Activated CD8-positive, alpha-beta T cell treated with anti-CD3 and anti-CD28 coated beads for 36 hours (primary cell): ENCODE measurements at regions of chr2 and their contacts with region 1.

Region 1: GRCh38 chr2:217713395-217714286 is 289.2 kb downstream of the TNS1 start:
- DNase-seq: peak; percentile 84
- ATAC-seq: peak; percentile 90
- H3K4me3 Mint-ChIP-seq: no peak overlapping the region
- H3K27ac Mint-ChIP-seq: no peak overlapping the region
- H3K4me1 Mint-ChIP-seq: peaks cover 4% of the 10 kb centered on the region
- H3K27me3 Mint-ChIP-seq: no peaks in the 10 kb centered on the region
- CTCF ChIP-seq: peak; percentile 87

Region 2: GRCh38 chr2:216698895-216699294 is 1014.7 kb before region 1 on chr2:
- CTCF ChIA-PET with region 1: interaction called, 10 read pairs
- POLR2A ChIA-PET with region 1: no interaction called
- intact Hi-C with region 1: no loop called
- DNase-seq: peak; percentile 21
- ATAC-seq: peak; percentile 70
- H3K4me3 Mint-ChIP-seq: no peak overlapping the region
- H3K27ac Mint-ChIP-seq: no peak overlapping the region
- H3K4me1 Mint-ChIP-seq: peaks cover 6% of the 10 kb centered on the region
- H3K27me3 Mint-ChIP-seq: peaks cover 30% of the 10 kb centered on the region
- CTCF ChIP-seq: peak; percentile 45

Region 3: DNA sequence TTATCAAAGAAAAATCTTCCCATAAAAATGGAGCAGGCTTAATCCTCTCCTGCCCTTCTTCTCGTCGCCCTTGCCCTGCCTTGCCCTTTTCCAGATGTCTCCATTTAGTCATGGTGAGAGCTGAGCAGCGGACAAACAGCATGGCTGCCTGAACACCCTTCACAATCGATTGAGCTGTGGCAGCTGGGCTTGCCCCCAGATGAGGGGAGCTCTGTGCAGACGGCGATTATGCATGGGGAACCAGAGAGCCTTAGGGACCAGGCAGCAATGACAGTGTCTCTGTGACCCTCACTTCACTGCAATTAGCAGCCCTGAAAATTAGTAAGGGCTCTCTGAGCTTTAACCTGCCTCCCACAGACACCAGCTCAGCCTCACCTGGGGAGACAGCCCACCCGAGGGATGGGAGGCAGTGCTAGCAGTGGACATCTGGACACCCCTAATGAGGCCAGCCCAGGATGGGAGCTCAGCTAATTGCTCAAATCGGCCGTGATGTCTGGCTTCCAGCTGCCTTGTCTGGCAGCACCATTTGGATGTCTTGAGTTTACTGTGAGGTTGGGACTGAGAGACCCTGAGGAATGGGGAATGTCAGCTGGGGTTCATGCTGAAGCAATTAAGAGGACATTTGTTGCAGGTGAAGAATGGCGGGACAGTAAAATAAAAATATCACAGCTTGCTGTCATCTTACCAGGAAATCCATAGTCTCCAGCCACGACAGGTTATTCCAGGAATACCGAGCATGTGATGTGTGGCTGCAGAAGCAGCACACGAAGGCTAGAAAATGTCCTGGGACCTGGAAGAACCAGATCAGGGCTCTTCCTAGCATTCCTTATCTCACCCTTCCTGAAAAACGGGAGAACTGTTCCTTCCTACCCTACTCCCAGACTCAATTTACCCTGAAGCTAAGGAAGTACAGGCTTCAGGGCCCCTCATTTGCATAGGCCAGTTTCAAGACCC is 76.4 kb before region 1 on chr2:
- CTCF ChIA-PET with region 1: interaction called, 12 read pairs
- POLR2A ChIA-PET with region 1: no interaction called
- intact Hi-C with region 1: no loop called
- DNase-seq: no peak
- ATAC-seq: no peak
- H3K4me3 Mint-ChIP-seq: no peak overlapping the region
- H3K27ac Mint-ChIP-seq: no peak overlapping the region
- H3K4me1 Mint-ChIP-seq: no peaks in the 10 kb centered on the region
- H3K27me3 Mint-ChIP-seq: peaks cover 1% of the 10 kb centered on the region
- CTCF ChIP-seq: no peak

Region 4: GRCh38 chr2:217695033-217695520 is 18.6 kb before region 1 on chr2:
- CTCF ChIA-PET with region 1: interaction called, 10 read pairs
- POLR2A ChIA-PET with region 1: interaction called, 3 read pairs
- intact Hi-C with region 1: no loop called
- DNase-seq: no peak
- ATAC-seq: peak; percentile 30
- H3K4me3 Mint-ChIP-seq: no peak overlapping the region
- H3K27ac Mint-ChIP-seq: no peak overlapping the region
- H3K4me1 Mint-ChIP-seq: peaks cover 12% of the 10 kb centered on the region
- H3K27me3 Mint-ChIP-seq: no peaks in the 10 kb centered on the region
- CTCF ChIP-seq: no peak